ENCODE measurements at regions of chr1 and their contacts with region 1.

Region 1: GRCh38 chr1:178749581-178750166 is 24.6 kb downstream of the RALGPS2 start:
- DNase-seq: no peak
- H3K4me3 ChIP-seq: no peak overlapping the region
- CTCF ChIP-seq: no peak

Region 2: GRCh38 chr1:178774263-178774662 is 24.6 kb after region 1 on chr1:
- CTCF ChIA-PET with region 1: interaction called, 11 read pairs
- POLR2A ChIA-PET with region 1: no interaction called
- DNase-seq: no peak
- H3K4me3 ChIP-seq: no peak overlapping the region
- CTCF ChIP-seq: no peak

Region 3: DNA sequence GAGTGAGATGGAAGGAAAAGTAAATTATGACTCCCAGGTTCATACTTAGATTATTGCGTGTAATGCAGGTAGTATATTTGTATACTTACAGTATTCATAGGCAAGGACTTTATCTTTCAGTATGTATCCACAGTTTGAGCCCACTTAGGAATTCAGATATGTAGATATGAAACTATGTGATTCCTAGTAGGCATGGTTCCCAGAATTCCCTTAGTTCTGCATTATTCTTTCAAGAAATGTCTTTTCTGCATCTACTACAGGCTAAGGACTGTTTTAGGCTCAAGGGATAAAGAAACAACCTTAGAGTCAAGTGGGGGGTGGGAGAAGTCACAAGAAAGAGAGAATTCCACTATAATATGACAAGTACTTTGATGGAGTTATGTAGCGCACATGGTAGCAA is 107.5 kb after region 1 on chr1:
- CTCF ChIA-PET with region 1: no interaction called
- POLR2A ChIA-PET with region 1: no interaction called
- DNase-seq: no peak
- H3K4me3 ChIP-seq: no peak overlapping the region
- CTCF ChIP-seq: no peak